Activated CD8-positive, alpha-beta T cell treated with anti-CD3 and anti-CD28 coated beads for 36 hours (primary cell): ENCODE measurements at regions of chr7 and their contacts with region 1.

Region 1: DNA sequence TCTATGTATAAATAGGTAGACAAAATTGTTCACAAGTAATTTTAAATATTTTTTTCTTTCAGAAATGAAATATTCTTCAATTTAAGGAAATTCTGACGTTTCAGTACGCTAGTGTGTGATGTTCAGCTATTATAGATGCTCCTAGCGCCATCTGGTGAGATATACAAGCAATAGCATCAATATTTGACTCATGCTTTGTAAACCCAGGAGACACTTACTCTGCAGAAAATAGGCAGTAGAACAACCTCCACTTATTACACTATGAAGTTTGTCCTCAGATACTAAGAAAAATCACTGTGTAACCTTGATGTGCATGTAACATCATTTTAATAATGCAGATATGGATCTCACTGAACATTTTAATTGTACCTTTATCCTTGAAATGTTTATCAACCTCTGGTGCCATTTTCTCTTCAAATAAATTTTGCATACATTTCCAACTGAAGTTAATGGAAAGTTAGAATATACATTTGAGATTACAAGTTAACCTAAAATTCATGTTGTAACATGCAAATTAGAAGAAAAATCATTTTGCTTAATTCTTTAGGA is 151.5 kb upstream of the FAM3C start:
- DNase-seq: no peak
- ATAC-seq: peak; percentile 69
- H3K4me3 Mint-ChIP-seq: no peak overlapping the region
- H3K27ac Mint-ChIP-seq: no peak overlapping the region
- H3K4me1 Mint-ChIP-seq: peaks cover 35% of the 10 kb centered on the region
- H3K27me3 Mint-ChIP-seq: peaks cover 2% of the 10 kb centered on the region
- CTCF ChIP-seq: peak; percentile 81

Region 2: DNA sequence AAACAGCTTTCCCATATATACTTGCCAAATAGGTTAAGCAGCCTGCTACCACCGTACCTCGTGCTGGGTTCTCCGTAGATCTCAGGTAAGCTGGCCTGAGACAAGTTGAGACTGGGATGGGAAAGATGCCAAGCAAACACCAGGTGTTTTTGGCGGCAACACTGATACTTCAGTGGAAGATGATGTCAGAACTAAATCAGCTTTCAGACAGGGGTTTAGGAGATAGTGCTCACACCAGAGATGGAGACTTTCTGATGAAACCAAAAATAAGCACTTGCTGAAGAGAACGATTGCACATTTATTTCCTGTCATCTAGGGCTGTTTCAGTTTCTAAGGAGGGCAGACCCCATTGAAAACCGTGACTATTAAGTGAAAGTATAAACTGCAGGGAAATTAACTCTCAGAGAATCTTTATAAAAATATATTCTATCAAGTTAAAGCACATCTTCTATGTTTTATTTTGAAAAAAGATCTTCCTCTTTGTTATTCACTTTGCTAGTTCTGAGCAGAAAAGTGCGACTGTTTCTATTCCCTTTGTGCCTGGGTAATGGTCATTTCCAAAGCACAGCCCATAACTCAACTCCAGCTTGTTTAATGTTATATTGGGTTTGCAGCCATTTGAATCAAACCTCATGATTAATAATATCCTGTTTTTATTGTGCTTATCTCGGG is 409.2 kb before region 1 on chr7:
- CTCF ChIA-PET with region 1: no interaction called
- POLR2A ChIA-PET with region 1: no interaction called
- intact Hi-C with region 1: loop called (anchors 10 kb)
- DNase-seq: peak; percentile 15
- ATAC-seq: peak; percentile 95
- H3K4me3 Mint-ChIP-seq: peak overlapping the region; percentile 60
- H3K27ac Mint-ChIP-seq: peak overlapping the region; percentile 68
- H3K4me1 Mint-ChIP-seq: peaks cover 22% of the 10 kb centered on the region
- H3K27me3 Mint-ChIP-seq: peaks cover 12% of the 10 kb centered on the region
- CTCF ChIP-seq: no peak

Region 3: GRCh38 chr7:121286742-121287734 is 260.6 kb before region 1 on chr7:
- CTCF ChIA-PET with region 1: no interaction called
- POLR2A ChIA-PET with region 1: no interaction called
- intact Hi-C with region 1: loop called (anchors 10 kb)
- DNase-seq: no peak
- ATAC-seq: peak; percentile 73
- H3K4me3 Mint-ChIP-seq: no peak overlapping the region
- H3K27ac Mint-ChIP-seq: peak overlapping the region; percentile 21
- H3K4me1 Mint-ChIP-seq: peaks cover 13% of the 10 kb centered on the region
- H3K27me3 Mint-ChIP-seq: peaks cover 5% of the 10 kb centered on the region
- CTCF ChIP-seq: no peak

Region 4: DNA sequence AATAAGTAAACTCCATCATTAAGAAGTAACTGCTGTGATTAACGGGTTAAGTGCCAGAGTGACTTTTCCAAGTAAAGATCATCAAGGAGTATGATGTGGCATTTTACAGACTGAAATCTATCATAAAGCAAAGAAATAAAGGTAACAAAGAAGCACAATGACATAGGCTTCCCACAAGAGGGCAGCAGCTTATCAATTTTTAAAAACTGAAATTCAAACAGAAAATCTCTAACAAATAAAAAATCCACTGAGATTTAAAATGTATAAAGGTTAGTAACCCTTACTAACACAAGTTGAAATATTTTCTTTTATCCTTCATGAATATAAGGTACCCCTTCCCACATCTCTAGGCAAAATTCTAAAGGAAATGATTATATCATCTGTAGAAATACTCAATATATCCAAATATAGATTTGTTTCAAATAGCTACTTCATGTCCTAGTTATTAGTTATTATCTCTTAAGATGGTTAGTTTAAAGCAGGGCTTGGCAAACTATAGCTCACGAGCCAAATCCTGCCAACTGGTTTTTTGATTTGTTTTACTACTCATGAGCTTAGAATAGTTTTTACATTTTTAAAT is 180.7 kb before region 1 on chr7:
- CTCF ChIA-PET with region 1: interaction called, 104 read pairs
- POLR2A ChIA-PET with region 1: interaction called, 4 read pairs
- intact Hi-C with region 1: loop called (anchors 1 kb)
- DNase-seq: peak; percentile 33
- ATAC-seq: peak; percentile 45
- H3K4me3 Mint-ChIP-seq: no peak overlapping the region
- H3K27ac Mint-ChIP-seq: no peak overlapping the region
- H3K4me1 Mint-ChIP-seq: peaks cover 24% of the 10 kb centered on the region
- H3K27me3 Mint-ChIP-seq: no peaks in the 10 kb centered on the region
- CTCF ChIP-seq: peak; percentile 84

Region 5: DNA sequence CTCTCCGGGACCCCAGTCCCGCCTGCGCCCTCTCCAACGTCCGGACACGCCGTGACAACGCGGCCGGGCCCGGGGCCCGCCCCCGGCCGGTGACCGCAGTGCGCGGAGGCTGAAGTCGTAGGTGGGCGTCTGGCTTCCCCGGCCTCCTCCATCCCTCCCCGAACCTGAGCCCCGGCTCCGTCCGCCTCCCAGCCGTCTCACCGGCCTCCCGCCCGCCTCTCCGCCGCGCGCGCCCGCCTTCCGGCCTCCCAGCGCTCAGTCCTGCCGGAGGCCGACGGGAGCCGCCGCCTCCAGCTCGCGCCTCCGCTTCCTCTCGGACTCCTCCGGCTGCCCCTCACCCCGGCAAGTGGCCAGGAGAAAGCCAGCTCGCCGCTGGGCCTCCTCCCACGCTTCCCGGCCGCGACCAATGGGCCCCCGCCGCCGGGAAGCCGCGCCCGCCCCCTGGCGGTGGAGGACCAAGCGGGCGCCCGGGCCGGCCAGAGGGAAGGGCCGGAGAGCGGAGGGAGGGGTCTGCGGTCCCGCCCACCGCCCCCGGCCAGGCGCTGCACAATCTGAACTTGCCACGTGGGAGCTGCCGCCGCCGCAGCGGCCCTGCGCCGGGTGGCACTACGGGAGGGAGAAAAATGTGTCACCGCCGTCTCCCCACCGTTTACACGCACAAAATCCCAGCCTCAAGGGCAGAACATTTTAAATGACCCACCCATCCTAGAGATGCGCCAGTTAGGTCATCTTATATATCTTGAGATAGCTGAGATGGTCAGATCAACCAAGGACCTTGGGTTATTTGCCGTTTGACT is 151.5 kb before region 1 on chr7 and contains the start of gene FAM3C:
- CTCF ChIA-PET with region 1: interaction called, 25 read pairs
- POLR2A ChIA-PET with region 1: interaction called, 7 read pairs
- intact Hi-C with region 1: no loop called
- DNase-seq: peak; percentile 90
- ATAC-seq: peak; percentile 88
- H3K4me3 Mint-ChIP-seq: peak within 1 kb of the TSS; percentile 79
- H3K27ac Mint-ChIP-seq: peak within 1 kb of the TSS; percentile 92
- H3K4me1 Mint-ChIP-seq: peaks cover 40% of the 10 kb centered on the region
- H3K27me3 Mint-ChIP-seq: no peaks in the 10 kb centered on the region
- CTCF ChIP-seq: peak; percentile 86
- total RNA-seq, gene FAM3C: 18.6 to 19.1 TPM

Region 6: DNA sequence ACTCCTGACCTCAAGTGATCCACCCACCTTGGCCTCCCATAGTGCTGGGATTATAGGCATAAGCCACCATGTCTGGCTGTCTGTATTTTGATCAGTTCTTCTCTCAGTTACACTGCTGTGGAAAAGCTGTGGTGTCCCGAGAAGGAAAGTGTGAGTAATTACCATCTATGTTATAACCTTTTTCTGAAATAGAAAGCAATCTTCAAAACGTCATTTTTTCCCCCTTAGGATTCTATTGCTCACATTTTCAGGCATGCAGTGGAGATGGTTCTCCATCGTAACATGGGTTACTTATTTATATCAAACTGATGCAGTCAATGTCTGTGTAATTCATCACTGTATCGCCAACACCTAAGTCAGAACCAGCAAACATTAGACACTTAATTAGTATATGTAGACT is 48.0 kb before region 1 on chr7:
- CTCF ChIA-PET with region 1: interaction called, 4 read pairs
- POLR2A ChIA-PET with region 1: interaction called, 3 read pairs
- intact Hi-C with region 1: loop called (anchors 5 kb)
- DNase-seq: peak; percentile 71
- ATAC-seq: peak; percentile 85
- H3K4me3 Mint-ChIP-seq: no peak overlapping the region
- H3K27ac Mint-ChIP-seq: peak overlapping the region; percentile 83
- H3K4me1 Mint-ChIP-seq: peaks cover 18% of the 10 kb centered on the region
- H3K27me3 Mint-ChIP-seq: no peaks in the 10 kb centered on the region
- CTCF ChIP-seq: no peak

Region 7: GRCh38 chr7:121530227-121531174 is 17.1 kb before region 1 on chr7:
- CTCF ChIA-PET with region 1: interaction called, 4 read pairs
- POLR2A ChIA-PET with region 1: interaction called, 4 read pairs
- intact Hi-C with region 1: loop called (anchors 1 kb)
- DNase-seq: peak; percentile 84
- ATAC-seq: peak; percentile 97
- H3K4me3 Mint-ChIP-seq: peak overlapping the region; percentile 17
- H3K27ac Mint-ChIP-seq: peak overlapping the region; percentile 91
- H3K4me1 Mint-ChIP-seq: peaks cover 37% of the 10 kb centered on the region
- H3K27me3 Mint-ChIP-seq: peaks cover 11% of the 10 kb centered on the region
- CTCF ChIP-seq: no peak

Region 8: GRCh38 chr7:121582258-121582657 is 34.6 kb after region 1 on chr7:
- CTCF ChIA-PET with region 1: no interaction called
- POLR2A ChIA-PET with region 1: no interaction called
- intact Hi-C with region 1: no loop called
- DNase-seq: no peak
- ATAC-seq: no peak
- H3K4me3 Mint-ChIP-seq: no peak overlapping the region
- H3K27ac Mint-ChIP-seq: no peak overlapping the region
- H3K4me1 Mint-ChIP-seq: no peaks in the 10 kb centered on the region
- H3K27me3 Mint-ChIP-seq: peaks cover 16% of the 10 kb centered on the region
- CTCF ChIP-seq: no peak